Calu3 (cell line): ENCODE measurements at regions of chr20 and their contacts with region 1.

Region 1: DNA sequence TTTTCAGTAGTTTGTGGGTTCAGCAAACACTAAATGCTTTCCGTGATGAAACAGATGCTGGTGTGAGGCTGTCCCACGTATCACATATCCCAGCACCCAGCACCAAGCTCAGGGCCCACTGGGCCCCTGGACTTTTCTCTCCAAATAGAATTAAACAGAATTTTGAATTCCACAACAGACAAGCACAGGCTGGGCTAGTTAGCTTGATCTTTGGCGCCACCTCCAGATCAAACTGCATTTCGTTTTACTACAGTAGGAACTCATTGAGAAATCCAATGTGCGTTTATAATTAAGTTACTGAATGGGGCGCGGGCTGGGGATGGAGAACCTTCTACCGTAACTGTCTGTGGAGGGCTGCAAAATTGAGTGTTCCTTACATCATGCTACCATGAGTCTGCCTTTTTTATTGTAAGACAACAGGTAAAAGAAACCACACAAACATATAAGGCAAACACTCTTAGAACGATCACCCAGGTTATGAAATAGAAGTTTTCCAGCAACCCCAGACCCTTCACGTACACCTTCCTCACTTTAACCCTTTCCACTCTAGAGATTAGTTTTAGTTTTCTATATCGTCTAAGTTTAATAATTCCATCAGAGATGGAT is 107.8 kb downstream of the ZFP64 start:
- DNase-seq: peak; percentile 80
- H3K4me3 Mint-ChIP-seq: no peak overlapping the region
- H3K27ac Mint-ChIP-seq: no peak overlapping the region
- H3K4me1 Mint-ChIP-seq: no peaks in the 10 kb centered on the region
- H3K27me3 Mint-ChIP-seq: no peaks in the 10 kb centered on the region
- CTCF ChIP-seq: peak; percentile 88

Region 2: GRCh38 chr20:51372176-51372803 is 711.4 kb before region 1 on chr20:
- CTCF ChIA-PET with region 1: no interaction called
- intact Hi-C with region 1: loop called (anchors 2 kb)
- DNase-seq: peak; percentile 89
- H3K4me3 Mint-ChIP-seq: no peak overlapping the region
- H3K27ac Mint-ChIP-seq: no peak overlapping the region
- H3K4me1 Mint-ChIP-seq: no peaks in the 10 kb centered on the region
- H3K27me3 Mint-ChIP-seq: peaks cover 48% of the 10 kb centered on the region
- CTCF ChIP-seq: peak; percentile 87

Region 3: GRCh38 chr20:51639206-51639832 is 444.4 kb before region 1 on chr20:
- CTCF ChIA-PET with region 1: interaction called, 3 read pairs
- intact Hi-C with region 1: loop called (anchors 1 kb)
- DNase-seq: peak; percentile 86
- H3K4me3 Mint-ChIP-seq: no peak overlapping the region
- H3K27ac Mint-ChIP-seq: no peak overlapping the region
- H3K4me1 Mint-ChIP-seq: peaks cover 9% of the 10 kb centered on the region
- H3K27me3 Mint-ChIP-seq: no peaks in the 10 kb centered on the region
- CTCF ChIP-seq: peak; percentile 98

Region 4: DNA sequence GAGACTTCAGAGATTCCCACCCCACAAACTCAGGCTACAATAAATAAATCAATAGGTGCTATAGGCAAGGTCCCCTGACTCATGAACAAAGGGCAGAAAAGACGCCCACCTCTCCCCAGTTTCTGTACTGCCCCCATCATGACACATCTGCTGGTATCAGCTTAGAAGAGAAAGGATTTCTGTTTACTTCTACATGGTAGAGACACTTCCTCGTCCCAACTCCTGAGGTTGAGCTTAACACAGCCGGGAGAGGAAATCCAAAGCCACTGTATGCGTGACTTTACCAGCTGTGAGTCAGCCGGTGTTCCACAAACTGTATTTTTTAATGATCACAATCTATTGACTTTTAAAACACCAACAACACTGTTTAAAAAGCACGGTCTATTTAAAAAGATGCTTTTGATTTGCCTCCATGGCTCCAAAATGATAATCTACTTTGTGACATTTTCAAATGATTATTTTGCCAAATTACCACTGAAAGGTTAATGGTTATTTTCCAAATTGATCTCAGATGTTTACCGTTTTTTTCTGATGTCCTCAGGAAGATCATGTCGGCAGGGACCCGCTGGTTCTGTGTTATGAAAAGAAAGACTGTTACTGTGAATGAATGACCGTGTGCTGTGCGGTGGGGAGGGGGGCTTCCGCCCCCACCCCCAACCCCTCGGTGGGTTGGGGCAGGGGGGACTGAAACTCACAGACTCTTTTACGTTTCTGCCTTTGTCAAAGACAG is 388.0 kb before region 1 on chr20:
- CTCF ChIA-PET with region 1: no interaction called
- intact Hi-C with region 1: loop called (anchors 2 kb)
- DNase-seq: peak; percentile 69
- H3K4me3 Mint-ChIP-seq: peak overlapping the region; percentile 5
- H3K27ac Mint-ChIP-seq: peak overlapping the region; percentile 81
- H3K4me1 Mint-ChIP-seq: peaks cover 47% of the 10 kb centered on the region
- H3K27me3 Mint-ChIP-seq: no peaks in the 10 kb centered on the region
- CTCF ChIP-seq: no peak

Region 5: GRCh38 chr20:52332230-52332629 is 248.5 kb after region 1 on chr20:
- CTCF ChIA-PET with region 1: no interaction called
- intact Hi-C with region 1: no loop called
- DNase-seq: no peak
- H3K4me3 Mint-ChIP-seq: no peak overlapping the region
- H3K27ac Mint-ChIP-seq: no peak overlapping the region
- H3K4me1 Mint-ChIP-seq: no peaks in the 10 kb centered on the region
- H3K27me3 Mint-ChIP-seq: peaks cover 60% of the 10 kb centered on the region
- CTCF ChIP-seq: no peak